Left lung (tissue), 14 donors: ENCODE measurements at regions of chr6 and their contacts with region 1.

Region 1: DNA sequence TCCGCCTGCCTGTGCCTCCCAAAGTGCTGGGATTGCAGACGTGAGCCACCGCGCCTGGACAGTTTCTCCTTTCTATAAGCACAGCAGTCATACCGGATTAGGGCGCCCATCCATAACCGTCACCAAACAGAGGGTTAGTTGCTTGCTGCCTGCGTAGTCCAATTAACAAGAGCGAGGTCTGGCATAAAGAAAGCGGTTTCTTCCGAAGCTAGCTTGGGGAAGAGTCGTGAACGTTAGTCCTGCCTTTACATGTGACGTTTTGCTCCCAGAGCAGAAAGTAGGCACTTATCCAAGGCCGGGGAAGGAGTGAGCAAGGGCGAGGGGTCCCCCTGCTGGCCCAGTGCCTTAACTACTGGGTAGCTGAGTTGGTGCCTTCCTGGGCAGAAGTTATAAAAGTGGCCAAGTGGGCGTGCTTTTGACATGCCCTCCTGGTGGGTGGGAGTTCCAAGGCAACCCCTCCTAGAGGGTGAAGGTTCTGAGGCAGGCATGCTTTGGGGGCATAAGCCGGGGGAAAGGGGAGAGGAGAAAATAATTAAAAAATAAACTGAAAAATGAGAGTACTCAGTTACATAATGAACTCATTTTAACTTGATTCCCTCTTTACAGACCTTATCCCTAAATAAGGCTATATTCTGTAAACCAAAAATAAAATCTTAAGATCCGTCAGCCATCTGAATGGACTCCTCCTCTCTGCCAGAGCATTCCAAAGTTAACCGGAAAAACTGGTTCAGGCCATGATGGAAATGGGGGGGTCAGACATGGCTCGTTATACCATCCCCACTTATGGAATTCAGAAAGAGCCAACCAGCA is 88.0 kb downstream of the FAM217A start:
- DNase-seq: peak; percentile 83 to 93 (median 88)
- ATAC-seq: peak; percentile 99
- H3K4me3 ChIP-seq: peak overlapping the region; percentile 14 to 26
- H3K27ac ChIP-seq: peak overlapping the region in 1 of 2 donors; percentile 57
- H3K4me1 ChIP-seq: peaks cover 4 to 17% of the 10 kb centered on the region in 2 donors
- H3K27me3 ChIP-seq: no peaks in the 10 kb centered on the region
- CTCF ChIP-seq: peak; percentile 57 to 80

Region 2: DNA sequence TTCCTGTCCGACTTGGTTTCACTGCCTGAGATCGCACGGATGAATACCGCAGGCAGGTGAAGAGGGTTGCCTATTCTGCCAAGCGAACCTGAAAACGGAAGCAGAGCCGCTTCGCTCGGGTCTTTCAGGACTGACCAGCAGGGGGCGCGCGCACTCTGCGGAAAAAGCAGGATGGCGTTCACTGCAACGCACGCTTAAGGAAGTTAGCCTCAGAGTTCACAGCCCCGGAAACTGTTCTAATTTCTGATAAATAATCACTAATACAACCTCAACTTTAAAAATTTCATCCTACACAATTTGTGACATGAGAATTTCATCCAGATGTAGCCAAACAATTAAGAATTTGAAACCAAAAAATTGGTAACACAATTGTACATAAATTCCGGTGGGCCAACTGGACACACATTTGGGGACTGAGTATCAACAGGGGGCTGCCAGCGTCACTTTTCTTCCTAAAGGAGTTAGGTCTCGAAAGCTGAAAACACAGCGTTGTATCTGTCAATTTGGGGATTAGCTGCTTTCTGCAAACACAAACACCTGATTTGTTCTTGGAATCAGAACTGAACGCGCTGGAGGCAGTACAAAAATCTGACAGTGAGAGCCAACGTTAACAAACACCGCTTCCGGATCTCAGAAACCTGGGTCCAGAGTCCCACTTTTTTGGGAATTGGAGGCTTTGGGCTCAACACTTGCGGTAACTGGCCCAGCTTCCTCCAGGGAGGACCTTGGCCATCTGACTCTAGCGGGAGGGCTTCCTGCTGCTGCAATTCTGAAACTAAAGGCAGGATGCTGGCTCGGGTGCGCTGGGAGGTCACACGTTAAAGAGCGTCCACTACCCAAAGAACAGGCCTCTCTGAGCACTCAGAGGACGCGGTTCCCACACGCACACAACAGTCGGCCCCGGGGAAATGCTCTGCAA is 248.2 kb before region 1 on chr6:
- intact Hi-C with region 1: loop called in 1 of 2 experiments (anchors 10 kb)
- DNase-seq: peak; percentile 72 to 98 (median 88)
- ATAC-seq: peak; percentile 93
- H3K4me3 ChIP-seq: no peak overlapping the region
- H3K27ac ChIP-seq: peak overlapping the region; percentile 45 to 69
- H3K4me1 ChIP-seq: peaks cover 8 to 65% of the 10 kb centered on the region in 2 donors
- H3K27me3 ChIP-seq: no peaks in the 10 kb centered on the region
- CTCF ChIP-seq: peak; percentile 92 to 96